ENCODE measurements at regions of chr6 and their contacts with region 1.

Region 1: DNA sequence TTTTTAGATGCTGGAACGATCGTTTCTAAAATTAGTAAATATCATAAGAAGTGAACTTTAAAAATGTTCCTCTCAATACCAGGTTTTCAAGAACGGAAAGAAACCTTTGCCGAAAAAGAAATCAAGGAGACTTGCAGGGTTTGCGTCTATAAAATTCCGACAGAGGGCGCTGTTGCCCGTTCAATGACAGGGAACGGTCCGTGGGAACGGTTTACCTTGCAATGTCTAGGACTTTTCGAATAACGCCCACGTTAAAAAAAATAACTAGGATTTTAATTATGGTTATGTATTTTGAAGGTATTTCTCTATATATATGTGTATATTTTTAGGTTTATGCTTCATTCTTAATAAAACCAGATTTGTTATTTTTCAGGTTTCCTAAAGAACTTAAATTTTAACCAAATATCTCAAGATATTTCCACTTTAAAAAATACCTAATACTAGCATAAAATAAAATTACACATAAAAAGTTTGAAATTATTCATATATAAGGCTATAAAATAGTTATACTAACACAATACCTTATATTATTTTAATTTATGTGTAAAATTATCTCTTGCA is 2.5 kb upstream of the TFAP2B start:
- H3K4me3 Mint-ChIP-seq: peak overlapping the region; percentile 70
- H3K27ac Mint-ChIP-seq: no peak overlapping the region
- H3K4me1 Mint-ChIP-seq: peaks cover 10% of the 10 kb centered on the region
- H3K27me3 Mint-ChIP-seq: peaks cover 60% of the 10 kb centered on the region

Region 2: DNA sequence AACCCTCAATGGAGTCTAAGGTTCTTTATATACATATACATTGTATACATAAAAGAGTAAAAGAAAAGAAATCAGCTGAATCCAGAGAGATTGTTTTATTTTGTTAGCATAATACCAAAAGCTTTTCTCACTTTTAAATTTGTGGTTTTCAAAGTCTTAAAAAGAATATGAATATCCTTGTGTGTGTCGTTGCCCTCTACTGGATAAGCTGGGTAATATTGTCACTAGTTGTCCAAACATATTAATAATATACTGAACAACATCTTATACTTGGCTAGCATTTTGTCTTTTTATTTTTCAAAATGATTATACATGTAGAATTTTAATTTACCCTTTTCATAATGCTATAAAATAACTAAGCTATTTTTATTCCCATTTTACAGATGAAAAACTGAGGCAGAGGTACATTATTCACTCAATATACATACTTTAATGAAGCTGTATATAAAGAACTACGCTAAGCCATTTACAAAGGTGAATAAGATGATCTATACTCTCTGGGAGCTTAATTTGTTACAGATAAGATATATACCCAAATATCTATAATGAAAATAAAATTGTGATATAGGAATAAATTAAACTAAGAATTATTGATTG is 534.2 kb after region 1 on chr6:
- intact Hi-C with region 1: loop called (anchors 1 kb)
- H3K4me3 Mint-ChIP-seq: no peak overlapping the region
- H3K27ac Mint-ChIP-seq: no peak overlapping the region
- H3K4me1 Mint-ChIP-seq: no peaks in the 10 kb centered on the region
- H3K27me3 Mint-ChIP-seq: peaks cover 14% of the 10 kb centered on the region

Region 3: DNA sequence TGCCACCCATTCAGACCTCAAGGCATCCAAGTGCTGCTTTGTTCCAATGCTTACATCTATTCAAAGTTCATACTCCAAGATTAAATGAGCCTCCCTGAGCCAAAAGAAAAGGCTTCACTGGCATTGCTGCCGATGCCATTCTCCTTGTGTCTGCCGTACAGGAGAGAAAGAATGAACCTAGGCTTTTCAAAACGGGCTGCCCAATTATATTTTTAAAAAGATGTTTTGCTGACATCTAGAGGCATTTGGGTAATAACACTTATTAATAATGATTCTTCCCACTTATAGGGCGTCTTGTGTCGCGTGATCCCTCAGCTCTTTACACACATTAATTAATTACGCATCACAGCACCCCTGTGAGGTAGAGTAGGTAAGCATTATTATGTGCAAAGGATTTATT is 725.7 kb after region 1 on chr6:
- intact Hi-C with region 1: loop called (anchors 2 kb)
- H3K4me3 Mint-ChIP-seq: no peak overlapping the region
- H3K27ac Mint-ChIP-seq: no peak overlapping the region
- H3K4me1 Mint-ChIP-seq: no peaks in the 10 kb centered on the region
- H3K27me3 Mint-ChIP-seq: no peaks in the 10 kb centered on the region

Region 4: DNA sequence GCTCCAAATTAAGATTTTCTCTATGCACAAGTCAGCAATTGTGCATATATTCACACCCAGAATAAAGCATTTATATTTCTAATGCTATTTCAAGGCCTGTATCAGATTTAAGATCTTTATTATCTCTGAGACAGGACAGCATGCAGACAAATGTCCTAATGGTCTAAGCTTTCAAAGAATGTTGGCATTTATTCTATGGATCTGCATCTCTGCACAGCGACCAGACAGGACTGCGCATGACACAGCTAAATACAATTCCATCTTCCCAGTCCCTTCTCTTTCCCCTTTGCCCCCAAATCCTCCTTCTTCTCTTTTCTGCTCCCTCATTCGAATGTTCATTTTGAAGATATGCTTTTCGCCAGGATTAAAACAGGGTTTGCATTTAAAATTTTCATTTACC is 792.7 kb after region 1 on chr6:
- intact Hi-C with region 1: loop called (anchors 10 kb)
- H3K4me3 Mint-ChIP-seq: no peak overlapping the region
- H3K27ac Mint-ChIP-seq: no peak overlapping the region
- H3K4me1 Mint-ChIP-seq: no peaks in the 10 kb centered on the region
- H3K27me3 Mint-ChIP-seq: no peaks in the 10 kb centered on the region

Region 5: GRCh38 chr6:51753635-51754034 is 937.4 kb after region 1 on chr6:
- intact Hi-C with region 1: loop called (anchors 2 kb)
- H3K4me3 Mint-ChIP-seq: no peak overlapping the region
- H3K27ac Mint-ChIP-seq: no peak overlapping the region
- H3K4me1 Mint-ChIP-seq: no peaks in the 10 kb centered on the region
- H3K27me3 Mint-ChIP-seq: no peaks in the 10 kb centered on the region

Region 6: GRCh38 chr6:51855310-51856082 is 1039.3 kb after region 1 on chr6:
- intact Hi-C with region 1: loop called (anchors 5 kb)
- H3K4me3 Mint-ChIP-seq: no peak overlapping the region
- H3K27ac Mint-ChIP-seq: no peak overlapping the region
- H3K4me1 Mint-ChIP-seq: no peaks in the 10 kb centered on the region
- H3K27me3 Mint-ChIP-seq: peaks cover 1% of the 10 kb centered on the region

Region 7: DNA sequence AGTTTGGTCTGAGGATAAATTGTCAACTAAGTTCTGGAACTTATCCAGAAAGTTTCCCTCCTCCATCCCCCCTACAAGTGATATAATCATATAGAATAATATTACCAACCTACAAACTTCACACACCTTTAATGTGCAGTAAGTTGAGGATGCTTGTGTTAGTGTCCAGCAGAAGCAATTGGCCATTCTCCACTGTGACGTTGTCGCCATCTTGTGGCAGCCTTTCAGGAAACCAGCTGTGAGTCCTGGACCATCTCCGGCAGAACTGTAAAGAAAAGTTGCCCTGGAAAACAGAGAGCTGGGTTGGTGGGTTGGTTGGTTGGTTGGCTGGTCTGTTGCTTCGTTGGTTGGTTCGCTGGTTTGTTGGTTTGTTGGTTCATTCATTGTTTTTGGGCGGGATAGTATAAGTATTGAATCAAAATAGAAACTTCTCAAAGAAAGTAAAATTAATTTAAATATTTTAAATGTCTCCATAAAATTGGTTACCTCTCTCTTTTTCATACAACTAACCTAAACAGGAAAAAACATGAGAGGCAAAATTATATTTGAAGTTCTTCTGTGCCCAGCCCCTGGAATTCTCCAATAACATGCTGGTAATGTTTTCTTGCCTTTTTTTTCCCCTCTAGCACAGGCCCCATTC is 1143.7 kb after region 1 on chr6:
- intact Hi-C with region 1: loop called (anchors 2 kb)
- H3K4me3 Mint-ChIP-seq: no peak overlapping the region
- H3K27ac Mint-ChIP-seq: no peak overlapping the region
- H3K4me1 Mint-ChIP-seq: no peaks in the 10 kb centered on the region
- H3K27me3 Mint-ChIP-seq: peaks cover 1% of the 10 kb centered on the region